K562 (cell line): ENCODE measurements at regions of chr19 and their contacts with region 1.

Region 1: DNA sequence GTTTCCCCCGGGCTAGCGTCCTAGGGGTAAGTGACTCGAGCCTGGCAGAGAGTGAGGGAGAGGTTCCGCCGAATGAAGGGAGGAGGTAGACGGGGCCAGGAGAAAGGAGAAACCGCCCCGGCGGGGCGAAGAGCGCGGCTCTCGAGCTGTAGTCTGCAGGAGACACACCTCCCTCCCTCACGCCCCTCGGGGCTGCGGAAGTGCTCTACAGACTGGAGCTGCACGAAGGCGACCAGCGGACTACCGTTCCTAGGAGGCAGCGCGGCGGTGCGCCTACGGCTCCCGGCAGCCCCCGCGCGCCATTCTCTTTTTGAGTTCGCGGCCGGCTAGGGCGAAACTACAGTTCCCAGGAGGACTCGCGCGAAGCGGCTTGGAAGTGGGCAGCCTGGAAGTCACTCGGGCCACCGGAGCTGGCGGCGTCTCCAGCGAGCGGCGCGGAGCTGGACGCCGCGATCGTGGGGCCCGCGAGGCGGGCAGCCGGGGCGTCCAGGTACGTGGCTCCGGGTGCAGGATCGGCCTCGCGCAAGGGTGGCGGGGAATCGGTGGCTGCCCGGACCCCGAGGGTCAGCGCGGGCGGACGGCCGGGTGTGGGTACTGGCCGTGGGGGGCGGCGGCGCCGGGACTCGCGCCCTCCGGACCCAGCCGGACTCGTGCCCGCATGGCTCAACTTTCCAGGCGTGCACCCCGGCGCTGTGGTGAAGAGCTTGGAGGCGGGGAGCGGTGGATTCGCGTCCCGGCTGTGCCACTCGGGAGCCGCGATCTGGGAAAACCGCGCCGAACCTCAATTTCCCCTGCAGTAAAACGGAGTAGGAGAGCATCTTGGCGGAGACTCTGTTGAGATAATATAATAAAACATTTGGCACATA is at the start of gene SIPA1L3:
- DNase-seq: peak; percentile 86 to 97 (median 88)
- ATAC-seq: peak; percentile 99
- H3K4me3 ChIP-seq: peak within 1 kb of the TSS; percentile 94
- H3K27ac ChIP-seq: peak within 1 kb of the TSS; percentile 39; the same call in 2 of the 3 replicates
- H3K4me1 ChIP-seq: peaks cover 6 to 13% of the 10 kb centered on the region in 2 experiments; a peak in 3 of 5 replicates
- H3K27me3 ChIP-seq: no peaks in the 10 kb centered on the region
- CTCF ChIP-seq: no peak
- EP300 ChIP-seq: no peak
- POLR2A ChIP-seq: no peak
- RAD21 ChIP-seq: no peak
- polyA plus RNA-seq, gene SIPA1L3: 0.01 to 0.15 TPM

Region 2: GRCh38 chr19:37987356-37988332 is 80.5 kb after region 1 on chr19:
- CTCF ChIA-PET with region 1: interaction called, 3 read pairs
- POLR2A ChIA-PET with region 1: no interaction called
- in situ Hi-C with region 1: no loop called
- intact Hi-C with region 1: loop called (anchors 1 kb)
- DNase-seq: peak; percentile 21 to 39 (median 34)
- ATAC-seq: peak; percentile 91
- H3K4me3 ChIP-seq: no peak overlapping the region
- H3K27ac ChIP-seq: no peak overlapping the region
- H3K4me1 ChIP-seq: no peaks in the 10 kb centered on the region; a peak in 1 of 5 replicates
- H3K27me3 ChIP-seq: peaks cover 0 to 9% of the 10 kb centered on the region in 2 experiments; a peak in 1 of 5 replicates
- CTCF ChIP-seq: peak; percentile 59 to 74 (median 64)
- EP300 ChIP-seq: no peak
- POLR2A ChIP-seq: no peak
- RAD21 ChIP-seq: peak in 1 of 2 experiments; percentile 60; a peak in 2 of 4 replicates

Region 3: DNA sequence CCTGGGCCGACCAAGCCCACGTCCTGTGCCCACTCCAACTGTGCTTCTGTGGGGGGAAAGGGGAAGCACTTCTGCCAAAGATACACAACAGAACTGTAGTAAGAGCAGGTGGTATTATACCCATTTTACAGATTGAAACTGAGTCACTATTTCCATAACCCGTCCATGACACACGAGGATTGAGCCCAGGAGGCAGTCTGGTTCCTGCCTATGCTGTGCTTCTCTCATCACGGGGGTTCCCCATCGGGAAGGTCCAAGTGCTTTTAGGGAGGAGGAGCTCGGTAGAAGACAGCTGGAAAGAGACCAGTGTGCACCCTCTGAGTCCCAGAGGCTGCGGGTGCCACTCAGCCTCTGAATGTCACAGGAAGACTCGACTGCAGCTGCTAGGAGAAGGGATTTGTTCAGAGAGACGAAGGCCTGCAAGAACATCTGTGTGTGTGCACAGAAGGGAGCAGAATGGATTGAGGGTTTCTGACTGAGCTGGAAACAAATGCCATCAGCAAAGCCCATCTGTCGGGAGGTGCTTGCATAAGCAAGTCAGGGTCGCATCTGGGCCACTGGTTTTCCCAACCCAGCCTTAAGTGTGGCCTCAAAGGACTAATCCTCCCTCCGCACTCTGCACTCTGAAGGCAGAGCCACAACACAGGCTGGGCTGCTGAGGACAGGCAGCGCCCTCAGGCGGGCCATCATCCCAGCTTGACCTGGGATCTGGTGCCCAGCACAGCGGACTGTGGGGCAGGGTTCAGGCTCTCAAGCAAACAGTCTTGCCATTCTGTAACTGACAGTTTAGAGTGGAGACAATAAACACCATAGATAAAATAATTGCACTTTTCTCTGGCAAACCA is 167.0 kb after region 1 on chr19:
- CTCF ChIA-PET with region 1: no interaction called
- POLR2A ChIA-PET with region 1: no interaction called
- in situ Hi-C with region 1: no loop called
- intact Hi-C with region 1: loop called (anchors 5 kb)
- DNase-seq: peak in 1 of 4 experiments; percentile 16
- ATAC-seq: peak; percentile 80
- H3K4me3 ChIP-seq: no peak overlapping the region
- H3K27ac ChIP-seq: no peak overlapping the region
- H3K4me1 ChIP-seq: peaks cover 3 to 5% of the 10 kb centered on the region in 2 experiments; a peak in 3 of 5 replicates
- H3K27me3 ChIP-seq: peaks cover 0 to 17% of the 10 kb centered on the region in 2 experiments; a peak in 2 of 5 replicates
- CTCF ChIP-seq: peak; percentile 36 to 47 (median 41); a peak in 5 of 6 replicates
- EP300 ChIP-seq: no peak
- POLR2A ChIP-seq: no peak
- RAD21 ChIP-seq: peak in 1 of 2 experiments; percentile 50; a peak in 2 of 4 replicates

Region 4: DNA sequence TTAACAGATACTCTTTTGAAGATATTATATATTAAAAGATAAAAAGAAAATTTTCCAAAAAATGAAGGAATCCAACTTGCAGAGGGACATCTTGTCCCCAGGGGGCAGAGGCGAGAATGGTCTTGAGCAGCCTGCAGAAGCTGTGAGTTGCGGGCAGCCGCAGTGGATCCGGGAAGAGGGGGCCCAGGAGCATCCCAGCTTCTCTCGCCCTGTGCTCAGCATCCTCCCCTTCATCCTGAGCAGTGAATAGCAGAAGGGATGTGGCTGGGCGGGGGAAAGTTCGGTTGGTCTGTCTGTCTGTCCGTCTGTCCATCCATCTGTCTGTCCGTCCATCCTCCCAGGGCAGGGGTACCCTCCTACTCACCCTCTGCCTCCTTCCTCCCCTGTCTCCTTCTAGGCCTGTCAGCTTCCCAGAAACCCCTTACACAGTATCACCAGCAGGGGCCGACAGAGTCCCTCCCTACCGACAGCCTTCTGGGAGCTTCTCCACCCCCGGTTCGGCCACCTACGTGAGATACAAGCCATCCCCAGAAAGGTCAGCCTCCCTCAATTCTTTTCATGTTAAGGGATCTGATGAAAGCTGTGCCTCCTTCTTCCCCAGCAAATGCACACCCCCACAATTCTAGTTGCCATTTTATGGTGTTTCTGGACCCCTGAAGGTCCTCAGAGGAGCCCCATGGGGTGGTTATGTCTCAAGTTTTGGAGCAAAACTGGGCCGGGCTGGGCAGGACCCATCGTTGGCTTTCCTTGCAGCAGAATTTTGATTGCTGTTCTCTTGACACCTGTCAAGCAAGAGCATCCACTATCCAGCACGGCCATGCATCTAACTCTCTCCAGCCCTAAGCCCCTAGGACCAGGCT is 235.3 kb after region 1 on chr19:
- CTCF ChIA-PET with region 1: no interaction called
- POLR2A ChIA-PET with region 1: no interaction called
- in situ Hi-C with region 1: no loop called
- intact Hi-C with region 1: loop called (anchors 1 kb)
- DNase-seq: peak; percentile 75 to 85 (median 80)
- ATAC-seq: peak; percentile 94
- H3K4me3 ChIP-seq: no peak overlapping the region
- H3K27ac ChIP-seq: no peak overlapping the region
- H3K4me1 ChIP-seq: peaks cover 8 to 16% of the 10 kb centered on the region in 2 experiments; a peak in 4 of 5 replicates
- H3K27me3 ChIP-seq: no peaks in the 10 kb centered on the region
- CTCF ChIP-seq: peak; percentile 93 to 96 (median 96)
- EP300 ChIP-seq: no peak
- POLR2A ChIP-seq: no peak
- RAD21 ChIP-seq: peak; percentile 78 to 91

Region 5: GRCh38 chr19:38229585-38230073 is 322.5 kb after region 1 on chr19:
- CTCF ChIA-PET with region 1: no interaction called
- POLR2A ChIA-PET with region 1: no interaction called
- in situ Hi-C with region 1: loop called (anchors 5 kb)
- intact Hi-C with region 1: loop called (anchors 2 kb)
- DNase-seq: peak; percentile 94 to 99 (median 98)
- ATAC-seq: peak; percentile 97
- H3K4me3 ChIP-seq: no peak overlapping the region; the same call in 1 of the 2 replicates
- H3K27ac ChIP-seq: no peak overlapping the region
- H3K4me1 ChIP-seq: peaks cover 4 to 37% of the 10 kb centered on the region in 2 experiments; a peak in 4 of 5 replicates
- H3K27me3 ChIP-seq: peaks cover 2 to 6% of the 10 kb centered on the region in 2 experiments; a peak in 2 of 5 replicates
- CTCF ChIP-seq: 0 out of 6 replicates have a peak, but pooled peaks of 1 of the 3 experiments have one; percentile 14
- EP300 ChIP-seq: no peak
- POLR2A ChIP-seq: no peak
- RAD21 ChIP-seq: no peak